GM12878 (cell line): ENCODE measurements at regions of chr15 and their contacts with region 1.

Region 1: DNA sequence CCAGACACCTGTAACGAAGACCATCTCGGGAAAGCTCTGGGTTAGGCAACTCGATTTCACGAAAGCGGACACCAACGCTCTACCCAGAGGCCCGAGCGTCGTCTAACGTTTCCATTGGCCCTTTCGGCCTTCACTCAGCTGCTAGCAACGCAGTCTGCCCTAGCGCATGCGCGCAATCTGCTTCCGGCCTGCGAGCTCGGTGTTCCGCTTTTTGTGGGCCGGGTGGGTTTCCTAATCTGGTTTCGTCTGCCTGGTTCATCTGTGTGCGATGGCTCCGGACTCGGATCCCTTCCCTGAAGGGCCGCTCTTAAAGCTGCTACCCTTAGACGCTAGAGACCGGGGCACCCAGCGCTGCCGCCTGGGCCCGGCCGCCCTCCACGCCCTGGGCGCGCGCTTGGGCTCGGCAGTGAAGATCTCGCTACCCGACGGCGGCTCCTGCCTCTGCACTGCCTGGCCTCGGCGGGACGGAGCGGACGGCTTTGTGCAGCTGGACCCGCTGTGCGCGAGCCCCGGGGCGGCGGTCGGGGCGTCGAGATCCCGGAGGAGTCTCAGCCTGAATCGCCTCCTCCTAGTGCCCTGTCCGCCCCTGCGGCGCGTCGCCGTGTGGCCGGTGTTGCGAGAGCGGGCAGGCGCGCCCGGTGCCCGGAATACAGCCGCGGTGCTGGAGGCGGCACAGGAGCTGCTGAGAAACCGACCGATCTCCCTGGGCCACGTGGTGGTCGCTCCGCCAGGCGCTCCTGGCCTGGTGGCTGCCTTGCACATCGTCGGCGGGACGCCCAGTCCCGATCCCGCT is 24.0 kb upstream of the GATM start:
- DNase-seq: peak; percentile 98
- ATAC-seq: peak; percentile 92
- H3K4me3 ChIP-seq: peak overlapping the region; percentile 83
- H3K27ac ChIP-seq: peak overlapping the region; percentile 89
- H3K4me1 ChIP-seq: peaks cover 6% of the 10 kb centered on the region; the same call in 1 of the 2 replicates
- H3K27me3 ChIP-seq: no peaks in the 10 kb centered on the region
- CTCF ChIP-seq: no peak
- EP300 ChIP-seq: no peak
- POLR2A ChIP-seq: peak; percentile 89
- RAD21 ChIP-seq: no peak

Region 2: GRCh38 chr15:45166834-45167630 is 235.3 kb before region 1 on chr15:
- CTCF ChIA-PET with region 1: interaction called, 109 read pairs
- POLR2A ChIA-PET with region 1: interaction called, 5 read pairs
- RAD21 ChIA-PET with region 1: interaction called, 28 read pairs
- SMC1A ChIA-PET with region 1: interaction called, 44 read pairs
- in situ Hi-C with region 1: no loop called
- intact Hi-C with region 1: loop called (anchors 2 kb)
- DNase-seq: peak; percentile 51
- ATAC-seq: peak; percentile 95
- H3K4me3 ChIP-seq: peak overlapping the region; percentile 79
- H3K27ac ChIP-seq: peak overlapping the region; percentile 40
- H3K4me1 ChIP-seq: peaks cover 12% of the 10 kb centered on the region
- H3K27me3 ChIP-seq: no peaks in the 10 kb centered on the region
- CTCF ChIP-seq: peak; percentile 79 to 87 (median 83); a peak in 5 of 6 replicates
- EP300 ChIP-seq: no peak
- POLR2A ChIP-seq: peak; percentile 75
- RAD21 ChIP-seq: peak; percentile 41

Region 3: GRCh38 chr15:45205192-45205591 is 197.2 kb before region 1 on chr15:
- CTCF ChIA-PET with region 1: interaction called, 211 read pairs
- POLR2A ChIA-PET with region 1: interaction called, 25 read pairs
- RAD21 ChIA-PET with region 1: interaction called, 87 read pairs
- SMC1A ChIA-PET with region 1: interaction called, 111 read pairs
- in situ Hi-C with region 1: no loop called
- intact Hi-C with region 1: loop called (anchors 1 kb)
- DNase-seq: peak; percentile 16
- ATAC-seq: peak; percentile 45
- H3K4me3 ChIP-seq: no peak overlapping the region
- H3K27ac ChIP-seq: no peak overlapping the region
- H3K4me1 ChIP-seq: no peaks in the 10 kb centered on the region; the same call in none of the 2 replicates
- H3K27me3 ChIP-seq: no peaks in the 10 kb centered on the region
- CTCF ChIP-seq: peak; percentile 90 to 94 (median 92)
- EP300 ChIP-seq: no peak
- POLR2A ChIP-seq: no peak
- RAD21 ChIP-seq: peak; percentile 87

Region 4: GRCh38 chr15:45307230-45307924 is 95.0 kb before region 1 on chr15:
- CTCF ChIA-PET with region 1: interaction called, 67 read pairs
- POLR2A ChIA-PET with region 1: interaction called, 3 read pairs
- RAD21 ChIA-PET with region 1: interaction called, 21 read pairs
- SMC1A ChIA-PET with region 1: interaction called, 14 read pairs
- in situ Hi-C with region 1: no loop called
- intact Hi-C with region 1: loop called (anchors 1 kb)
- DNase-seq: peak; percentile 31
- ATAC-seq: peak; percentile 71
- H3K4me3 ChIP-seq: peak overlapping the region; percentile 60; the same call in 1 of the 2 replicates
- H3K27ac ChIP-seq: no peak overlapping the region
- H3K4me1 ChIP-seq: no peaks in the 10 kb centered on the region
- H3K27me3 ChIP-seq: no peaks in the 10 kb centered on the region
- CTCF ChIP-seq: peak; percentile 39 to 65 (median 58); a peak in 5 of 6 replicates
- EP300 ChIP-seq: no peak
- POLR2A ChIP-seq: no peak
- RAD21 ChIP-seq: peak; percentile 58

Region 5: GRCh38 chr15:45378149-45378912 is 24.0 kb before region 1 on chr15 and contains the start of gene GATM:
- CTCF ChIA-PET with region 1: interaction called, 37 read pairs
- POLR2A ChIA-PET with region 1: interaction called, 18 read pairs
- RAD21 ChIA-PET with region 1: interaction called, 12 read pairs
- SMC1A ChIA-PET with region 1: interaction called, 37 read pairs
- in situ Hi-C with region 1: no loop called
- intact Hi-C with region 1: no loop called
- DNase-seq: peak; percentile 66
- ATAC-seq: peak; percentile 91
- H3K4me3 ChIP-seq: peak within 1 kb of the TSS; percentile 78
- H3K27ac ChIP-seq: peak within 1 kb of the TSS; percentile 64
- H3K4me1 ChIP-seq: no peaks in the 10 kb centered on the region
- H3K27me3 ChIP-seq: no peaks in the 10 kb centered on the region
- CTCF ChIP-seq: peak; percentile 3 to 28 (median 23); a peak in 3 of 6 replicates
- EP300 ChIP-seq: 0 out of 4 replicates have a peak, but pooled peaks of 1 of the 2 experiments have one; percentile 44
- POLR2A ChIP-seq: peak; percentile 94
- RAD21 ChIP-seq: no peak
- polyA plus RNA-seq, gene GATM: 11.7 to 17.6 TPM

Region 6: DNA sequence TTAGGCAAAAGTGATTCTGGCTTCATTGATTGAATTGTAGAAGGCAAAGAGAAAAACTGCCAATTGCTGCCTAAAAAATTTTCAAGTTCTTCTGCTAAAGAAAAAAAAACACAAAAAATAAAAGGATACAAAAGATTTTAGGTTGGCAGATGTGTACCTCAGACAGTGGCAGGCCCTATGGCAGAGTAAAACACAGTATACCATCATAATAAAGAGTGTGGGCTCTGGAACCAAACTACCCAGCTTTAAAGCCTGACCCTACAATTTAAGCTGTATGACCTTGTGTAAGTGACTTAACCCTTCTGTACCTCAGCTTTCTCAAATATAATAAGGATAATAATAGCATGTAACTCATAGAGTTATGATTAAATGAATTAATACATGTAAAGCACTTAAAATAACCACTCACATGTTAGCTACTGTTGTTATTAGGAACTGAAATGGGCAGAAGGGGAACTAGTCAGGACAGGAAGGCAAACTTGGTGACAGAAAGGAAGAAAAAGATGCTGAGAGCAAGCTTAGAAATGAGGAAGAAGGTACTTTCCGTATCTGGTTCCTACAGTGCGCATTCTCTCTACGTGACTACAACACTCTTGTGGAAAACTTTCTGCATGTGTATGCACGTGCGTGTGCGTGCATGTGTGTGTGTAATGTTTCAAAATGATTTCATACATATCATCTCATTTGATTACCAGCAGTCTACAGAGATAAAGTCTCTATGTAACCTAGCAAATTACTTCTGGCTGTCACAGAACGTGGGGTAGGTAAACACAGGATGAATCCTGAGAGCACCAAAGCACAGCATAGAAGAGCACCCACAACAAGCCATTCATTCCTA is 10.4 kb before region 1 on chr15:
- CTCF ChIA-PET with region 1: interaction called, 38 read pairs
- POLR2A ChIA-PET with region 1: interaction called, 19 read pairs
- RAD21 ChIA-PET with region 1: interaction called, 27 read pairs
- SMC1A ChIA-PET with region 1: interaction called, 32 read pairs
- in situ Hi-C with region 1: no loop called
- intact Hi-C with region 1: no loop called
- DNase-seq: peak; percentile 90
- ATAC-seq: peak; percentile 96
- H3K4me3 ChIP-seq: 0 out of 2 replicates have a peak overlapping the region, but pooled peaks have one; percentile 11
- H3K27ac ChIP-seq: peak overlapping the region; percentile 72
- H3K4me1 ChIP-seq: peaks cover 21% of the 10 kb centered on the region
- H3K27me3 ChIP-seq: no peaks in the 10 kb centered on the region
- CTCF ChIP-seq: no peak
- EP300 ChIP-seq: peak; percentile 76 to 85
- POLR2A ChIP-seq: no peak
- RAD21 ChIP-seq: no peak

Region 7: GRCh38 chr15:45587095-45587860 is 184.9 kb after region 1 on chr15 and contains the start of gene BLOC1S6:
- CTCF ChIA-PET with region 1: interaction called, 5 read pairs
- POLR2A ChIA-PET with region 1: interaction called, 4 read pairs
- RAD21 ChIA-PET with region 1: interaction called, 11 read pairs
- SMC1A ChIA-PET with region 1: interaction called, 5 read pairs
- in situ Hi-C with region 1: no loop called
- intact Hi-C with region 1: no loop called
- DNase-seq: peak; percentile 74
- ATAC-seq: peak; percentile 93
- H3K4me3 ChIP-seq: peak within 1 kb of the TSS; percentile 97
- H3K27ac ChIP-seq: peak within 1 kb of the TSS; percentile 85
- H3K4me1 ChIP-seq: peaks cover 4% of the 10 kb centered on the region; the same call in 1 of the 2 replicates
- H3K27me3 ChIP-seq: no peaks in the 10 kb centered on the region
- CTCF ChIP-seq: no peak
- EP300 ChIP-seq: peak in 1 of 2 experiments; percentile 10; a peak in 1 of 4 replicates
- POLR2A ChIP-seq: peak; percentile 99
- RAD21 ChIP-seq: no peak
- polyA plus RNA-seq, gene BLOC1S6: 13.5 to 16.9 TPM